ENCODE measurements at regions of chr13 and their contacts with region 1.

Region 1: DNA sequence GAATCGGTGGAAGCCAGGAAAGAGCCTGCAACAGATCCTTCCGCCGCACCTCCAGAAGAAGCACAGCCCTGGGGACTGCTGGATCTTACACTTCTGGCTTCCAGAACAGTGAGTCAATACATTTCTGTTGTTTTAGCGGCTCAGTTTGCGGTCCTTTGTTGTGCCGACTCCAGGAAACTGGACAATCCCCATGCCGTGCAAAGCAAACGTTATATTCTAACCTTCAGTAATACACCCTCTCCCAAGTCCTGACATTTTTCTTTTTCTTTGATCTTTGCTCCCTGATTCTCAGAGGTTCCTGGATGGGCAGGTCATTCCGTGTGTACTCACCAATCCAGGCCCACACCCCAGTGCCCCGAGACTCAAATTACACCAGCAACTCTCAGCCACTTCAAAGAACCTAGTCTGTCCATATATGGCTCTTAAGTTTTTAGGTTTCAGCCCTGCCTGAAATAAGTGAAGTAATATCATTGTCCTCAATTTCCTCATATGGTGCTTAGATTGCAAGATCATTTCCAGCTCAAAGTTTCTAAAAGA is 387.1 kb upstream of the SGCG start:
- DNase-seq: no peak
- ATAC-seq: no peak
- H3K4me3 ChIP-seq: no peak overlapping the region
- H3K27ac ChIP-seq: no peak overlapping the region
- H3K4me1 ChIP-seq: no peaks in the 10 kb centered on the region
- H3K27me3 ChIP-seq: peaks cover 0 to 4% (median 4%) of the 10 kb centered on the region in 3 donors
- CTCF ChIP-seq: no peak
- POLR2A ChIP-seq: no peak

Region 2: DNA sequence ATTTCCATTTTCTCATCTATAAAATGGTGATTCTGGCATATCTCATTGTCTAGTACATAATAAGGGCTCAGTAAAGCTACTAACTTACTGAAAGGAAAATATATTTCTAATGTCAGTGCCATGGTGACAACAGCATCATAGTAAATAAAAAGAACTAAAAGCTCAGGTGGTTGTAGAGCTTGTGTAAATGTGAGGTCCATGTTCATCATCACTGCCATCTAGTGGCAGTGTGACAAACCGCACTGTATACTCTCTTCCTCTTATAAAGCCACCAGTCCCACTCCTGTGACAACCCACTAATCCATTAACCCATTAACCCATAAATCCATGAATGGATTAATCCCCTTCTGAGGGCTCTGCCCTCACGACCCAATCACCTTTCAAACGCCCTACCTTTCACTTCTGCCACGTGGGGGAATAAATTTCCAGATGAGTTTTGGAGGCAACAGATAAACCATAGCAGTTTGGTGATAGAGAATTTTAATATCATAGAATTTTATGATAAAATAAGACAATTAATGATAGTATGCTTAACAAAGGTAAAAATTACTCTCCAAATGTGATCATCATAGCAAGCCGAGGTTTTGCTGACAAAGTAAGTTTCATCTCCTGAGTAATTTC is 226.7 kb after region 1 on chr13:
- in situ Hi-C with region 1: loop called in 1 of 4 experiments (anchors 25 kb)
- intact Hi-C with region 1: no loop called
- DNase-seq: peak in 1 of 2 donors; percentile 24
- ATAC-seq: peak; percentile 60 to 83
- H3K4me3 ChIP-seq: no peak overlapping the region
- H3K27ac ChIP-seq: no peak overlapping the region
- H3K4me1 ChIP-seq: no peaks in the 10 kb centered on the region
- H3K27me3 ChIP-seq: peaks cover 0 to 2% (median 0%) of the 10 kb centered on the region in 3 donors
- CTCF ChIP-seq: peak; percentile 25 to 76 (median 53)
- POLR2A ChIP-seq: no peak

Measured in gastrocnemius medialis (tissue), 4 donors.